Prostate gland (tissue), 2 donors: ENCODE measurements at regions of chr2 and their contacts with region 1.

Region 1: GRCh38 chr2:96665083-96665569 is 22.6 kb downstream of the FER1L5 start:
- DNase-seq: peak; percentile 72
- H3K4me3 ChIP-seq: no peak overlapping the region
- H3K27ac ChIP-seq: peak overlapping the region; percentile 37 to 74
- H3K4me1 ChIP-seq: no peaks in the 10 kb centered on the region
- H3K27me3 ChIP-seq: no peaks in the 10 kb centered on the region
- CTCF ChIP-seq: no peak
- POLR2A ChIP-seq: no peak

Region 2: GRCh38 chr2:96608469-96609455 is 56.4 kb before region 1 on chr2:
- intact Hi-C with region 1: no loop called
- DNase-seq: no peak
- H3K4me3 ChIP-seq: no peak overlapping the region
- H3K27ac ChIP-seq: no peak overlapping the region
- H3K4me1 ChIP-seq: no peaks in the 10 kb centered on the region
- H3K27me3 ChIP-seq: no peaks in the 10 kb centered on the region
- CTCF ChIP-seq: no peak
- POLR2A ChIP-seq: no peak

Region 3: DNA sequence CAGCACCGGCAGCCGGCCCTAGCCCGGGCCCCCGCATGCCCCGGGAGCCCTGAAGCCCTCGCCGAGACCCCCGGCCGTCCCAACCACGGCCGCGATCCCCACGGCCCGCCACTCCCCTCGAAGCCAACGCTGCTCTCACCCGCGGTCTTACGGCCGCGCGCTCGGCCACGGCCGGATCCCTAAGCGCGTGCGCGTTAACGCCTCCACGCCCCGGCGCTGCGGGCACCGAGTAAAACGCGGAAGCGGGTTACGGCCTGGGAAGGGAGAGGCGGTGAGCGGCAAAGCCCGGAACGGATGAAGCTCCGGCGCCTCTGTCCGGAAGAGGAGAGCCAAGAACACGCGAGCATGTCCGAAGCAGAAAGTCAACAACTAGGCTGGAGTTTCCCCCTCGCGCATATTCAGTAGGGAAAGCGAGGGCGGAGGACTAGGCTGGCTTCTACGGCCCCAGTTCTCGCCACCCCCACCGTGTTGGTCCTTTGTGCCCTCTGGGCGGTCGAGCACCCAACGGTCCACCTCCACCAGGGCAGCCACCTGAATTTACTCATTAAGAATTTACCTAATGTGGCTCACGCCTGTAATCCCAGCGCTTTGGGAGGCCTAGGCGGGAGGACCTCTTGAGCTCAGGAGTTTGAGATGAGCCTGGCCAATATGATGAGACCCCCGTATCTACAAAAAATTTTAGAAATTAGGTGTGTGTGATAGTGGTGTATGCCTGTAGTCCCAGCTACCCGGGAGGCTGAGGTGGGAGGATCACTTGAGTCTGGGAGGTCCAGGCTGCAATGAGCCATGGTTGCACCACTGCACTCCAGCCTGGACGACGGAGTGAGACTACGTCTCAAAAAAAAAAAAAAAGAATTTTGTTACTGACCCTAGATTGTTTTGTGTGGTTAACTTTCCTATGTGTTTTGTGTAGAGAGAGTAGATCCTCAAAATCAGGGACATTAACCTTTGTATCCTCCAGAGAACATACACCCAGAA is 26.7 kb before region 1 on chr2 and contains the start of gene KANSL3:
- intact Hi-C with region 1: loop called (anchors 2 kb)
- DNase-seq: peak; percentile 85
- H3K4me3 ChIP-seq: peak within 1 kb of the TSS; percentile 82 to 89
- H3K27ac ChIP-seq: peak within 1 kb of the TSS; percentile 92 to 96
- H3K4me1 ChIP-seq: no peaks in the 10 kb centered on the region
- H3K27me3 ChIP-seq: no peaks in the 10 kb centered on the region
- CTCF ChIP-seq: peak in 2 of 4 experiments; percentile 19 to 39
- POLR2A ChIP-seq: peak; percentile 91
- total RNA-seq, gene KANSL3: 41.3 to 70.0 TPM

Region 4: DNA sequence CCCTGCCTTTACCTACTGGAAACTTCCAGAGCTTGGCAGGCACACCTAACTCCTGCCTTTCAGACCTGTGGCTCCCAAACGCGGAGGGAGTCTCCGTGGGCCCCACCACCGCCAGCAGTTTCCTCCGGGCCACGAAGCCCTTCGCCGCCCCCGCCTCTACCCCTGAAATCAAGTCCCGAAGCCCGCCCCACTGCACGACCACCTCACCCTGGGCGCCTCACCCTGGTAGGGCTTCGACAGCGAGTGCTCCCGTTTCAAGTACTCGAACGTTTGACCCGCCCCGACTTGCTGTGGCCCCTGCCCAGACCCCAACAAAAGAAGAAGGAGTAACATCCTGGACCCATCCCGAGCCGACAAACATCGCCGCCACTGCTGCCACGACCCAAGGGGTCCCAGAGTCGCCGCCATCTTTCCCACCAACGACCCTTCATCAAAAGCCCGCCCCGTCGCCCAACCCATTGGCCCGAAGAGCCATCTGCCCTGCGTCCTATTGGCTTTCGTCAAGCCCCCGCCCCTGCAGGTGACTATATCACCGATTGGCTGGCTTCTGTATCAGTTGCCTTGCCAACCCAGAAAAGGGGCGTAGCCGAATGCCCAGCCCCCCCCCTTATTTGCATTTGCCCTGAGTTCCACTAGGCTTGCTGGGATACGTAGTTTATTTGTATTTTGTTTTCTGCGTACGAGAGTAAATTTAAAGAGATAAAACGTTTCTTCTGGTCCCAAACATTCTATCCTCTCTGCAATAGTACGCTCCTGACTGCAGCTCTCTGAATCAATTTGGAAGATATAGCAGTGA is 74.7 kb after region 1 on chr2 and contains the start of gene LMAN2L:
- intact Hi-C with region 1: loop called (anchors 5 kb)
- DNase-seq: peak; percentile 97
- H3K4me3 ChIP-seq: peak within 1 kb of the TSS; percentile 65 to 67
- H3K27ac ChIP-seq: peak within 1 kb of the TSS; percentile 57 to 68
- H3K4me1 ChIP-seq: peaks cover 6% of the 10 kb centered on the region
- H3K27me3 ChIP-seq: no peaks in the 10 kb centered on the region
- CTCF ChIP-seq: peak in 2 of 4 experiments; percentile 28 to 44
- POLR2A ChIP-seq: peak; percentile 67
- total RNA-seq, gene LMAN2L: 26.1 to 26.8 TPM